Panc1 (cell line): ENCODE measurements at regions of chr7 and their contacts with region 1.

Region 1: GRCh38 chr7:120691915-120692314 is 166.0 kb downstream of the TSPAN12 start:
- DNase-seq: no peak
- ATAC-seq: no peak
- H3K4me3 ChIP-seq: no peak overlapping the region
- H3K27ac ChIP-seq: no peak overlapping the region
- H3K4me1 ChIP-seq: no peaks in the 10 kb centered on the region
- H3K27me3 ChIP-seq: no peaks in the 10 kb centered on the region
- CTCF ChIP-seq: no peak

Region 2: GRCh38 chr7:119232091-119232490 is 1459.8 kb before region 1 on chr7:
- CTCF ChIA-PET with region 1: no interaction called
- POLR2A ChIA-PET with region 1: no interaction called
- in situ Hi-C with region 1: no loop called
- intact Hi-C with region 1: loop called (anchors 5 kb)
- DNase-seq: no peak
- ATAC-seq: no peak
- H3K4me3 ChIP-seq: no peak overlapping the region
- H3K27ac ChIP-seq: no peak overlapping the region
- H3K4me1 ChIP-seq: no peaks in the 10 kb centered on the region
- H3K27me3 ChIP-seq: no peaks in the 10 kb centered on the region
- CTCF ChIP-seq: no peak

Region 3: DNA sequence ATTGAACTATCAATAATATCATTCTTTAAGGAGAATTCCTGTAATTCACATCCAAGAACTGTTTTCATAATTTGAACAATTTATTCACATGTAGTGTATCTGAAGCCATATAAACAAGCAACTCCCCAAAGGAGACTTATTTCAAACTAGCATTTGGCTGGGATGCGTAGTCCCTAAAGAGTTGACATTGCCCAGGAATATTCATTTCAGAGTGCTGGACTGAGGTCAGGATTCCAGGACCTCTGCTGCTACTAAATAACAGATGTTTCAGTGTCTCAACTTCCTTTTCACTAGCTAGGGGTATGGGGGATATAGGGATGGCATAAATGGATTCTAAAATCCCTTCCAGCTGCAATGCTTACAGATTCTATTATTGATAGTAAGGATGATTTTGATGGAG is 10.9 kb before region 1 on chr7:
- CTCF ChIA-PET with region 1: no interaction called
- POLR2A ChIA-PET with region 1: no interaction called
- in situ Hi-C with region 1: no loop called
- intact Hi-C with region 1: no loop called
- DNase-seq: no peak
- ATAC-seq: no peak
- H3K4me3 ChIP-seq: no peak overlapping the region
- H3K27ac ChIP-seq: no peak overlapping the region
- H3K4me1 ChIP-seq: no peaks in the 10 kb centered on the region
- H3K27me3 ChIP-seq: no peaks in the 10 kb centered on the region
- CTCF ChIP-seq: no peak

Region 4: DNA sequence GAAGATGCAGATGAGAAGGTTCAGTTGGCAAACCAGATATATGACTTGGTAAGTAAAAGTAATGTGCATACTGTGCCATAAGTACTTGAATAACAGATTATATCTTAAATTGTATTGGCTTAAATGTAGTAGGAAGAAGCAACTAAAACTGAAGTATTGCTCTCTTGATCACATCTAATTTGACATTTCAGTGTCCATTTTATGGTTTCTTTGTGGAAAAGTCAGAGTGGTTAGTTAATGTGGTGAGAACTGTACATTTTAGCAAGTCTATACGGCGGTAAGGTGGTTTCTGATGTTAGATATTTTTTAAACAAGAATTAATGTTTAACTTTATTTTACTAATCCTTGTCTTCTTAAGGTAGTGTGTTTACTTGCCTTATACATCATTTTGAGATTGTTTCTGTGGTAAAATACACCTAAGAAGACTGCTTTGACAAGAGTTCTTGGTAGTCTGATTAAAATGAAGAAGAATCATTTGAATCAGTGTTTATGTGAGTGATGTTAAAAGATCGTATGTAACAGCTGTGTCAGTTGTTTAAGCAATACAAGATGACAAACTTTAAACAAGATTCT is 263.7 kb after region 1 on chr7:
- CTCF ChIA-PET with region 1: no interaction called
- POLR2A ChIA-PET with region 1: no interaction called
- in situ Hi-C with region 1: no loop called
- intact Hi-C with region 1: no loop called
- DNase-seq: no peak
- ATAC-seq: no peak
- H3K4me3 ChIP-seq: no peak overlapping the region
- H3K27ac ChIP-seq: no peak overlapping the region
- H3K4me1 ChIP-seq: peaks cover 7% of the 10 kb centered on the region
- H3K27me3 ChIP-seq: no peaks in the 10 kb centered on the region
- CTCF ChIP-seq: no peak